HAP-1 (cell line): ENCODE measurements at regions of chr16 and their contacts with region 1.

Region 1: GRCh38 chr16:28211712-28212534 is at the start of gene XPO6:
- DNase-seq: peak; percentile 89 to 99
- H3K4me3 ChIP-seq: peak within 1 kb of the TSS; percentile 84
- H3K4me1 ChIP-seq: peaks cover 21% of the 10 kb centered on the region
- H3K27me3 ChIP-seq: no peaks in the 10 kb centered on the region

Region 2: DNA sequence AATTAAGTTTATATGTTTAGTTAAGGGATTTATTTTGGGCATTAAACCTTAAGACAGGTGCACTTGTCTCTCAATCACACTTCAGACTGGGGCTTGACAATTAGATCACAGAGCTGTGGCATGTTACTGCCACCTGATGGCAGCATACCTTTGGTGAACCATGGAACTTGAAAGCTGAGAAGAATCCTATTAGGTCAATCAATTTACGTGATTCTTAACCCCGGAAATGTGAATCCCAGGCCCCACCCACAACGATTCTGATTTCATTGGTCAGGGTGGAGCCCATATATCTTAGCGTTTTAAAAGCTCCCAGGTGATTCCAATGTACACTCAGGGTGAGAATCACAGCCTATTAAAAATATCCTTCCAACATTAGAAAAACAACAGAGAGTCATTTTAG is 239.4 kb before region 1 on chr16:
- in situ Hi-C with region 1: loop called (anchors 25 kb)
- DNase-seq: peak; percentile 28 to 52
- H3K4me3 ChIP-seq: no peak overlapping the region
- H3K4me1 ChIP-seq: no peaks in the 10 kb centered on the region
- H3K27me3 ChIP-seq: 0 out of 2 replicates have a peak, but pooled peaks cover 2% of the 10 kb centered on the region

Region 3: GRCh38 chr16:28166394-28167208 is 45.3 kb before region 1 on chr16:
- in situ Hi-C with region 1: loop called (anchors 5 kb)
- DNase-seq: no peak
- H3K4me3 ChIP-seq: no peak overlapping the region
- H3K4me1 ChIP-seq: peaks cover 72% of the 10 kb centered on the region
- H3K27me3 ChIP-seq: no peaks in the 10 kb centered on the region